ENCODE measurements at regions of chr6 and their contacts with region 1.

Region 1: DNA sequence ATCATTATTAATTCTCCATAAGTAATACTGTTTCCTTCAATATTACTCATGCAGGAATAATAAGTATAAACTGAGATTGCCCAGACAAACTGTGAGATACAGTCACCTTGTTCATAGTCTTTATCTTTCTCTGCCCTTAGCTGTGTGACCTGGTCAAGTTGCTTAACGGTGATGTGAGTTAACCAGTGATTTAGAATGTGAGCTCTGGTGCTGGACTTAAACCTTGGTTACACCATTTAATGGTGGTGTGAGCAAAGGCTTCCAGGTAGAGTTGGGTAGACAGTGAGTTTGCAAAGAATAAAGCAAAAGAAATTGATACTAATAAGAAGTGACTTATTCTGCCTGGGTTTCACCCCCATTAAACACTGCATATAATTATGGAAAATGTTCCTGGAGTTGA is 86.2 kb upstream of the DEFB112 start:
- DNase-seq: no peak
- ATAC-seq: no peak
- H3K4me3 ChIP-seq: no peak overlapping the region
- H3K27ac ChIP-seq: no peak overlapping the region
- H3K4me1 ChIP-seq: no peaks in the 10 kb centered on the region
- H3K27me3 ChIP-seq: no peaks in the 10 kb centered on the region

Region 2: DNA sequence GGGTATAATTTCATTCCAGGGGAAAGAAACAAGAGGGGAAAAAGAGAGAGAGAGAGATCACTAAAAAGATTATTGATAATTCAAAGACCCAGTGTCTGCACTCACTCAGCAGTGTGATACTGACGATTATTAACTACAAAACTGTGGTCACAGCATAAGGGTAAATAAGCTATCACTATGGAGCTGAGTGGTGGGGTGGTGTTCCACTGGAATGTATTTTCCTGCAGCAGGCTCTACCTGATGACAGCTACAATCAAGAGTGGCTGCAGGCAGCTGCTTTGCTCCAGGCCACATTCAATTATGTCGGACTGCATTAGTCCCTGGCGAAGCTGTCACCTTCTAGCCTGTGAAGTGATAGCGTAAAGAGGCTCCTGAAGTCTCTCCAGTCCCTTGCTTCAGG is 455.2 kb after region 1 on chr6:
- intact Hi-C with region 1: loop called in 1 of 4 experiments (anchors 10 kb)
- DNase-seq: peak in 1 of 3 donors; percentile 21
- ATAC-seq: no peak
- H3K4me3 ChIP-seq: no peak overlapping the region
- H3K27ac ChIP-seq: no peak overlapping the region
- H3K4me1 ChIP-seq: no peaks in the 10 kb centered on the region
- H3K27me3 ChIP-seq: peaks cover 2% of the 10 kb centered on the region

Measured in right cardiac atrium (tissue), 5 donors.